Heart left ventricle (tissue), 16 donors: ENCODE measurements at regions of chr14 and their contacts with region 1.

Region 1: GRCh38 chr14:55270832-55271565 is at the start of gene FBXO34:
- DNase-seq: peak; percentile 98 to 100 (median 99)
- ATAC-seq: peak; percentile 90 to 94 (median 92)
- H3K4me3 ChIP-seq: peak within 1 kb of the TSS; percentile 70 to 99 (median 95)
- H3K27ac ChIP-seq: peak within 1 kb of the TSS; percentile 81 to 97 (median 93)
- H3K4me1 ChIP-seq: peaks cover 0 to 40% (median 27%) of the 10 kb centered on the region in 12 donors
- H3K27me3 ChIP-seq: no peaks in the 10 kb centered on the region
- CTCF ChIP-seq: peak; percentile 98 to 100 (median 99)
- POLR2A ChIP-seq: peak; percentile 34 to 96
- total RNA-seq, gene FBXO34: 17.1 to 33.4 (median 21.1) TPM

Region 2: DNA sequence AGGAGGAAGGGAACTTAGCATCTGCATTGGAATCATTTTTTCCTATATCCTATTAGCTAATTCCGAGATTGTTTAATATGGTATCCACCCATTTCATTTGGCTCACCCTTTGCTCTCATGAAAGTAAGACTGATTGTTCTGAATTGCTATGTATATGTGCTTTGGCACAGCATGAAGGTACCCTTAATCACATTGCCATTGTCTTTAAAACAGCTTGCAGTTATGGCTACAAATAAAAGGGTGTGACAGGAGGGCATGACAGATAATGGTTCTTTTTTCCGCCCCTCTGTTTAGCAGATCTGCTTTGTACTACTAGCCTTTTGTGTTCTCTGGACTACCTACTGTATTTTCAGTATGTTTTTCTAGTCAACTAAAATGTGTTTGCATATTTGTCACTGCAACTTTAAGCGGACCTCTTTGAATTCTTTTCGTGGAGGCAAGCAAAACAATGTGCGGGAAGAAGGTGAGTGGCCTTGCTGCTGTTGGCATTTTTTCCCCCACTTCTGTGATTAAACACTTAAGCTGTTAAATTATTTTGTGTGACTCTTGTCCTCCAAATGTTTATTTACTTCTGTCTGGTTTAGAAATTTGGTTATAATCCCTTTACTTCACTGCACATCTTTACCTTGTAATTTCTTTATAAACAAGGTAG is 36.1 kb after region 1 on chr14:
- intact Hi-C with region 1: loop called in 2 of 10 experiments (anchors 5 kb)
- DNase-seq: no peak
- ATAC-seq: peak; percentile 50 to 80 (median 62)
- H3K4me3 ChIP-seq: peak overlapping the region in 2 of 12 donors; percentile 0 to 8
- H3K27ac ChIP-seq: peak overlapping the region in 10 of 12 donors; percentile 2 to 67 (median 30)
- H3K4me1 ChIP-seq: peaks cover 0 to 72% (median 52%) of the 10 kb centered on the region in 12 donors
- H3K27me3 ChIP-seq: no peaks in the 10 kb centered on the region
- CTCF ChIP-seq: no peak
- POLR2A ChIP-seq: no peak

Region 3: GRCh38 chr14:55317542-55318306 is 46.7 kb after region 1 on chr14:
- intact Hi-C with region 1: no loop called
- DNase-seq: no peak
- ATAC-seq: no peak
- H3K4me3 ChIP-seq: no peak overlapping the region
- H3K27ac ChIP-seq: peak overlapping the region in 1 of 12 donors; percentile 15
- H3K4me1 ChIP-seq: peaks cover 0 to 21% (median 0%) of the 10 kb centered on the region in 12 donors
- H3K27me3 ChIP-seq: no peaks in the 10 kb centered on the region
- CTCF ChIP-seq: no peak
- POLR2A ChIP-seq: no peak

Region 4: DNA sequence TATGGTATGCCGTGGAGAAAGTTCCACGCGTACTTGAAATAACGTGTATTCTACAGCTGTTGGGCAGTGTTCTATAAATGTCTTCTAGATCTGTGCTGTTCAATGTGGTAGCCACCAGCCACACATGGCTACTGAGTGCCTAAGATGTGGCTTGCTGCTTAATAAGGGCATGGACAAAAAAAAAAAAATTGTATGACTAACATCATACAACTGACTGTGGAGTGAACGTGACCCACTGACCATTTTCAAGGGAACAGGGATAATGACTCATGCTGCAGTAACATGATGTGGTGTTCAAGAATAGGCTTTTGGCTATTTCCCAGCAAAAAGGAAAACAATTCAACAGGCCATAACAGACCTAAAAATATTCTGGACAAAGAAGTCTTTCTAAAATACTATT is 127.7 kb after region 1 on chr14:
- intact Hi-C with region 1: no loop called
- DNase-seq: peak in 1 of 5 donors; percentile 37
- ATAC-seq: peak; percentile 87 to 93 (median 91)
- H3K4me3 ChIP-seq: no peak overlapping the region
- H3K27ac ChIP-seq: peak overlapping the region in 11 of 12 donors; percentile 8 to 68 (median 53)
- H3K4me1 ChIP-seq: peaks cover 0 to 32% (median 21%) of the 10 kb centered on the region in 12 donors
- H3K27me3 ChIP-seq: no peaks in the 10 kb centered on the region
- CTCF ChIP-seq: no peak
- POLR2A ChIP-seq: no peak

Region 5: DNA sequence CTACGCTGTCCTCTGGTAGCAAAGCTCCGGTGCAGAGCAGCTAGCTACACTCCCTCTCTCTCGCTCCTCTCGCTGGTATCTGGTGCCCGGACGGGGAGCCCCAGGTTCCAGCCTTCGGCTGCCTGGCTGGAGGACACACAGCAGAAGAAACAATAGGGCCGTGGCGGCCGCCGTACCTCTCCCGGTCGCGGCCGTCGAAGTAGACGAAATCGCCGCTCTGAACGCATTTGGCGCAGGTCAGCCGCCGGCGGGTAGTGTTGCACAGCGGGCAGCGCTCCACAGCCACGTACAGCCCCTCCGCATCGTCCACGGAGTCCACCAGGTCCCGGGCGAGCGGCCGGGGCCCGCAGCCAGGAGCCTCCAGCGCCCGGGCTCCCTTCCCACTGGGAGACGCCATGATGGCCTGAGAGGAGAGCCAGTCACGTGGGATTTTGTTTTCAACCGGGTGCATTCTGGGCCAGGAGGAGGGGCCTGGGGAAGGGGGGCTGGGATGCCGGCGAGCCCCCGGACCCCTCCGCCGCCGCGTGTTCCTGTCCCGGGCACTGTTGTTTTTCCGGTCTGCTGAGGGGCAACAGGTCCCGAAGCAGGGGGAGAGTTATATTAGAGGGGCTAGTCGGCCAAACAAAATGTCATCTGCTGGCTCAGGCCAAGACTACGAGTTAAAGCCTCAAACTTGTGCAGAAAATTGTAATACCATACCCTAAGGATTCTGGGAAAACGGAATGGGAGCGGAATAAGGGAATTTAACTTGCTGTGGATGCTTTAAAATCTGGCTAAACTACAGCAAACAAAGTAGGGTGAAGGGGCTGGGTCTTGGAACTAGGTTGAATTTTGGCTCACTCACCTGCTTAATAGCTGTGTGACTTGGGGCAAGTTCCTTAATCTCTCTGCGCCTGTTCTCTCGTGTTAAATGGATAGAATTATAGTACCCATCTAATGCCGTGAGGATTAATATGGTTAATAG is 140.7 kb after region 1 on chr14 and contains the start of gene ATG14:
- intact Hi-C with region 1: loop called in 5 of 10 experiments (anchors 5 to 10 kb)
- DNase-seq: peak; percentile 88 to 90 (median 89)
- ATAC-seq: peak; percentile 96 to 100 (median 100)
- H3K4me3 ChIP-seq: peak within 1 kb of the TSS; percentile 72 to 97 (median 88)
- H3K27ac ChIP-seq: peak within 1 kb of the TSS; percentile 61 to 93 (median 88)
- H3K4me1 ChIP-seq: peaks cover 5 to 33% (median 23%) of the 10 kb centered on the region in 12 donors
- H3K27me3 ChIP-seq: no peaks in the 10 kb centered on the region
- CTCF ChIP-seq: no peak
- POLR2A ChIP-seq: peak in 1 of 2 donors; percentile 57
- total RNA-seq, gene ATG14: 8.7 to 16.2 (median 12.9) TPM